GM12878 (cell line): ENCODE measurements at regions of chr7 and their contacts with region 1.

Region 1: DNA sequence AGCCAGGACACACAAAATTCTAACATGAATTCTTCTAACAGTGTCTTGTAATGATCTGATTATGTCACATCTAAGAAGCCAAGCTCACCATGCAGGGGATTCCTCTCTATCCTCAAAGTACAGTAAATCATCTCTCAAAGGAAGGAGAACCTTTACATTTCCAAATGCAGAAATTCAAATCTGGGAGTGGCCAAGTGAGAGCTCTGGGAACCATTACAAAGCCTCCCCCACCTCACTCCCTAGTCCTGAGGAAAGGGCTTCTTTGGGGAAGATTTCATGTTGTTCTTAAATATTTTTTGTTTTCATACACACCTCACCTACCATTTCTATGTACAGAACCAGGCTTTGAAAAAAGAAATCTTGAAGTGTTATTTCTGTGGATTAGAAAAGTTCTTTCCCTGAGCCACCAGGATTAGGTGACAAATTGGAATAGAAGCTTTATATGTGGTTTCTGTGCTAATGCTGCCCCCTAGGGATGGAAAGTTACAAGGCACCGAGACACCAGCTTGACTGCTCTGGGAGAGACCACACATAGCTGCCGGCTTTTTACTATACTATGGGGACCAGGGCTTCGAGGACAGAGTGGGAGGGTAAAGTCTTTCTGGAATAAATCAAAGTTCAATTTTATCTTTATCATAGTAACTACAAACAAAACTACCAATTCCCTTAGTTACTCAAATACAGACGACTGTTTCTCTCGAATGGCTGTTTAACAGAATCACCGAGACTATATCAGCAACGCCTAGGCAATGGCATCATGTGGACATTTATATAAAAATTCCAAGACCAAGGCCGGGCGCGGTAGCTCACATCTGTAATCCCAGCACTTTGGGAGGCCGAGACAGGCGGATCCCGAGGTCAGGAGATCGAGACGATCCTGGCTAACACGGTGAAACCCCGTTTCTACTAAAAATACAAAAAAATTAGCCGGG is 116.1 kb downstream of the RNF216 start:
- DNase-seq: peak; percentile 53
- ATAC-seq: peak; percentile 94
- H3K4me3 ChIP-seq: no peak overlapping the region
- H3K27ac ChIP-seq: no peak overlapping the region
- H3K4me1 ChIP-seq: peaks cover 12% of the 10 kb centered on the region
- H3K27me3 ChIP-seq: no peaks in the 10 kb centered on the region
- CTCF ChIP-seq: peak; percentile 71 to 90 (median 82)
- EP300 ChIP-seq: no peak
- POLR2A ChIP-seq: no peak
- RAD21 ChIP-seq: peak; percentile 88

Region 2: DNA sequence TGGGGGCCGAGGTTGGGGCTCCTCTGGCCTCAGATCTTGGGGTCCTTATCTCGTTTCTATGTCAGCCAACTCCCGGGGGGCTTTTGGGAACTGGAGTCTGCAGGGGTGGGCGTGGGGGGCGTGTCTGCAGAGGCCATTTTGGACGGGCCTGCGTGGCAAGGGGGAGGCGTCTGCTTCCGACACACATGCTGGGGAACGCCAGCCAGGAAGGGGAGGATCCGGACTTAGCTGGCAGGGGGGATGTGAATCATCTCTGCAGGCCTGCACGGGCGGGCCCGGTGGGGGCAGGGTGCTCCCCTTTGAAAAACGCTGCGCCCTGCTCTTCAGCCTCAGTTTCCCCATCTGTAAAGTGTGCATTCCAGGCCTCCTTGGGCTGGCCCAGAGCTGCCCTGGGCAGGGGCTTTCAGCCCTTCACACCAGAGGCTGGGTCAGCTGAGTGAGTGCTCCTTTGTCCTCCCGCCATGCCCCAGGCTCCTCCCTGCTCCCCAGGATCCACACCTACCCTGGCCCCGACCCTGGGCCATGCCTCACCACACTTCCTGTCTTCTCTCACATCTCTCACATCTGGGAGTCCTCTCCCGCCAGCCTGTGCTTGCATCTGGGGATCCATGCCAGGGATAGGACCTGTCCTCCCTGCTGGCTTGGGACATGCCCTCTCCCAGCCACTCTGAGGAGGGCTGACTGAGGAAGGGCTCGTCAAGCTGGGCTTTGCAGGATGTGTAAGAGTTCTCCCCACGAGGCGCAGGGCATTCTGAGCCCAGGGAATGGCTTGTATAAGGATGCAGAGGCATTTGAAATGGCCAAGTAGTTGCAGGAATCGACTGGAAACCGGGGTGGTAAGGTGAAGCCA is 69.1 kb before region 1 on chr7:
- CTCF ChIA-PET with region 1: interaction called, 16 read pairs
- POLR2A ChIA-PET with region 1: interaction called, 3 read pairs
- RAD21 ChIA-PET with region 1: interaction called, 4 read pairs
- SMC1A ChIA-PET with region 1: interaction called, 4 read pairs
- in situ Hi-C with region 1: no loop called
- intact Hi-C with region 1: no loop called
- DNase-seq: no peak
- ATAC-seq: peak; percentile 55
- H3K4me3 ChIP-seq: peak overlapping the region; percentile 99
- H3K27ac ChIP-seq: peak overlapping the region; percentile 79
- H3K4me1 ChIP-seq: peaks cover 37% of the 10 kb centered on the region
- H3K27me3 ChIP-seq: no peaks in the 10 kb centered on the region
- CTCF ChIP-seq: no peak
- EP300 ChIP-seq: no peak
- POLR2A ChIP-seq: peak; percentile 43; the same call in 1 of the 2 replicates
- RAD21 ChIP-seq: no peak

Region 3: GRCh38 chr7:5610500-5611186 is 54.7 kb before region 1 on chr7:
- CTCF ChIA-PET with region 1: interaction called, 12 read pairs
- POLR2A ChIA-PET with region 1: interaction called, 4 read pairs
- RAD21 ChIA-PET with region 1: interaction called, 9 read pairs
- SMC1A ChIA-PET with region 1: interaction called, 3 read pairs
- in situ Hi-C with region 1: no loop called
- intact Hi-C with region 1: no loop called
- DNase-seq: no peak
- ATAC-seq: no peak
- H3K4me3 ChIP-seq: no peak overlapping the region
- H3K27ac ChIP-seq: no peak overlapping the region
- H3K4me1 ChIP-seq: no peaks in the 10 kb centered on the region
- H3K27me3 ChIP-seq: no peaks in the 10 kb centered on the region
- CTCF ChIP-seq: no peak
- EP300 ChIP-seq: no peak
- POLR2A ChIP-seq: no peak
- RAD21 ChIP-seq: no peak

Region 4: GRCh38 chr7:5694912-5695726 is 29.8 kb after region 1 on chr7:
- CTCF ChIA-PET with region 1: interaction called, 407 read pairs
- POLR2A ChIA-PET with region 1: interaction called, 5 read pairs
- RAD21 ChIA-PET with region 1: interaction called, 78 read pairs
- SMC1A ChIA-PET with region 1: interaction called, 131 read pairs
- in situ Hi-C with region 1: no loop called
- intact Hi-C with region 1: no loop called
- DNase-seq: peak; percentile 94
- ATAC-seq: peak; percentile 67
- H3K4me3 ChIP-seq: peak overlapping the region; percentile 49
- H3K27ac ChIP-seq: peak overlapping the region; percentile 94
- H3K4me1 ChIP-seq: peaks cover 89% of the 10 kb centered on the region
- H3K27me3 ChIP-seq: no peaks in the 10 kb centered on the region
- CTCF ChIP-seq: no peak
- EP300 ChIP-seq: peak; percentile 79 to 86
- POLR2A ChIP-seq: peak; percentile 97
- RAD21 ChIP-seq: peak; percentile 17; the same call in 1 of the 2 replicates

Region 5: DNA sequence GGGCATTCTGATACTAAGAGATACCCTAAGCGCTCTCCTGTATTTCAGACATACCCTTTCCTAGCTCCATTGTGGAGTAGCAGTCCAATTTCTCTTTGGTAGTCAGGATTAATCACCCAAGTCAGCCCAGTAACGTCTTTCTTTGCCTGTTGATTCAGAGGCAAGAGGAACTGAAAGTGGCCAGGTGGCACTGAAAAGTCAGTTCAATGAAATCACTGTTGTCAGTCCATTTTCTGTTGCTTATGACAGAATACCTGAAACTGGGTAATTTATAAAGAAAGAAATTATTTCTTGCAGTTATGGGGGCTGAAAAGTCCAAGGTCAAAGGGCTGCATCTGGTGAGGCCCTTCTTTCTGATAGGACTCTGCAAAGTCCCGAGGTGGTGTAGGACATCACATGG is 406.0 kb after region 1 on chr7:
- CTCF ChIA-PET with region 1: no interaction called
- POLR2A ChIA-PET with region 1: no interaction called
- RAD21 ChIA-PET with region 1: no interaction called
- SMC1A ChIA-PET with region 1: no interaction called
- in situ Hi-C with region 1: no loop called
- intact Hi-C with region 1: no loop called
- DNase-seq: peak; percentile 57
- ATAC-seq: peak; percentile 99
- H3K4me3 ChIP-seq: no peak overlapping the region
- H3K27ac ChIP-seq: no peak overlapping the region
- H3K4me1 ChIP-seq: peaks cover 6% of the 10 kb centered on the region
- H3K27me3 ChIP-seq: no peaks in the 10 kb centered on the region
- CTCF ChIP-seq: no peak
- EP300 ChIP-seq: peak; percentile 36 to 89; a peak in 3 of 4 replicates
- POLR2A ChIP-seq: no peak
- RAD21 ChIP-seq: no peak